MCF 10A (cell line): ENCODE measurements at regions of chr11 and their contacts with region 1.

Region 1: DNA sequence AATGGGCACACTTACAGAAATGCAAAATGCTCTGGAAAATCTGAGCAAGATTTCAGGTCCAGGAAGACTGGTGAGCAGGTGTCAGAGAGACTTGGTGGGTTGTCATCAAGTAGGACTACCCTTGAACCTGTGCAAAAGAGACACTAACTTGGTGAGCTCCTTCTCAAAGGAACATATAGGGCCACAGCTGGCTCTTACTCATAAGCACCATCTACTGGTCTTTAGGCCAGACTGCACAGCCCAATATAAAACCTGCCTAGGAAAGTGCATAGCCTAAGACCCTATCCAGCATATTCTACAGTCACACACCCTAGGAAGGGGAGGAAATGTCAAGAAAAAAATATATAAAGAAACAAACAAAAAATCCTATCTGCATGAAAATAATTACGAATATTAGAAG is 18.2 kb upstream of the OR10W1 start:
- DNase-seq: peak; percentile 56
- H3K4me3 Mint-ChIP-seq: no peak overlapping the region
- H3K27ac Mint-ChIP-seq: no peak overlapping the region
- H3K4me1 Mint-ChIP-seq: no peaks in the 10 kb centered on the region
- H3K27me3 Mint-ChIP-seq: no peaks in the 10 kb centered on the region
- CTCF ChIP-seq: peak; percentile 69

Region 2: GRCh38 chr11:57751676-57752253 is 534.5 kb before region 1 on chr11 and contains the start of gene BTBD18:
- CTCF ChIA-PET with region 1: interaction called, 6 read pairs
- POLR2A ChIA-PET with region 1: no interaction called
- intact Hi-C with region 1: loop called (anchors 5 kb)
- DNase-seq: peak; percentile 51
- H3K4me3 Mint-ChIP-seq: no peak within 1 kb of the TSS
- H3K27ac Mint-ChIP-seq: no peak within 1 kb of the TSS
- H3K4me1 Mint-ChIP-seq: no peaks in the 10 kb centered on the region
- H3K27me3 Mint-ChIP-seq: no peaks in the 10 kb centered on the region
- CTCF ChIP-seq: peak; percentile 45
- total RNA-seq, gene BTBD18: not detected in 2 replicates

Region 3: DNA sequence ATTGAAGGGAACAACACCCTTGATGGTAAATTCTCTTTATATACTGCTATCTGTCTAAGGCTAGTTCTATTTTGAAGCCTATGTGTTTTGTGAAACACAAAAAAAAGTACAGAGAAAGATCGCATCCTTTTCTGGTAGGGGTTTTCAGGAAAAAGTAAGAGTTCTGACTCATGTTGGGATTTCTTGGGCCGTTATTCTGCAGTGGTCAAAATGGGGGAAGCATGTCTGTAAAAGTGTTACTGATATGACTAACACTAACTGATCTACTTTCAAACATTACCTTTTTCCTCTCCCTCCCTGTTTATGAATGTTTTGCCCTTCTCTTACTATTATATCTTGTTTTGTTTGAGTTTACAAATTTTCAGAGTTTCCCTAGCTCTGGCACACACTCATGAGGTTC is 470.8 kb before region 1 on chr11:
- CTCF ChIA-PET with region 1: interaction called, 13 read pairs
- POLR2A ChIA-PET with region 1: no interaction called
- intact Hi-C with region 1: loop called (anchors 2 kb)
- DNase-seq: no peak
- H3K4me3 Mint-ChIP-seq: no peak overlapping the region
- H3K27ac Mint-ChIP-seq: no peak overlapping the region
- H3K4me1 Mint-ChIP-seq: no peaks in the 10 kb centered on the region
- H3K27me3 Mint-ChIP-seq: no peaks in the 10 kb centered on the region
- CTCF ChIP-seq: no peak

Region 4: GRCh38 chr11:58301576-58301975 is 15.3 kb after region 1 on chr11:
- CTCF ChIA-PET with region 1: interaction called, 11 read pairs
- POLR2A ChIA-PET with region 1: no interaction called
- intact Hi-C with region 1: no loop called
- DNase-seq: no peak
- H3K4me3 Mint-ChIP-seq: no peak overlapping the region
- H3K27ac Mint-ChIP-seq: no peak overlapping the region
- H3K4me1 Mint-ChIP-seq: no peaks in the 10 kb centered on the region
- H3K27me3 Mint-ChIP-seq: no peaks in the 10 kb centered on the region
- CTCF ChIP-seq: no peak

Region 5: GRCh38 chr11:58433638-58434203 is 147.5 kb after region 1 on chr11:
- CTCF ChIA-PET with region 1: no interaction called
- POLR2A ChIA-PET with region 1: no interaction called
- intact Hi-C with region 1: no loop called
- DNase-seq: no peak
- H3K4me3 Mint-ChIP-seq: no peak overlapping the region
- H3K27ac Mint-ChIP-seq: no peak overlapping the region
- H3K4me1 Mint-ChIP-seq: no peaks in the 10 kb centered on the region
- H3K27me3 Mint-ChIP-seq: peaks cover 25% of the 10 kb centered on the region
- CTCF ChIP-seq: no peak

Region 6: DNA sequence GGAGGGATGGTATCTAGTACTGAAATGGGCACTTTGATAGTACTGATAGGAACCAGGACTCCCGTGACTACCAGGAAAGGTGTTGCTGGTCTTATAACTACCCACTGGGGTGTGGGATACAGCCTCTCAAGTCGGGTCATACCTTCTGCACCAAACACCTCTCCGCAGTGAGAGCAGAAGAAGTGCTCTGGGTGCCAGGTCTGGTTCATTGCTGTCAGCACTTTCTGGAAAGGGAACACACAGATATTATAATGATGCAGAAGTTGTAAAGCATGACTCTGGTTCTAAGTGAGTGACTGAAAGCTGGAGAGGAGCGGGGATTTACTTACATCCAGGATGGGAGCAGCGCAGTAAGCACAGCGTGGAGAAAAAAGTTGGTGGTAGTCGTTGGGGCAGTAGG is 263.4 kb after region 1 on chr11:
- CTCF ChIA-PET with region 1: no interaction called
- POLR2A ChIA-PET with region 1: no interaction called
- intact Hi-C with region 1: no loop called
- DNase-seq: no peak
- H3K4me3 Mint-ChIP-seq: no peak overlapping the region
- H3K27ac Mint-ChIP-seq: no peak overlapping the region
- H3K4me1 Mint-ChIP-seq: no peaks in the 10 kb centered on the region
- H3K27me3 Mint-ChIP-seq: no peaks in the 10 kb centered on the region
- CTCF ChIP-seq: no peak